CD8-positive, alpha-beta T cell (primary cell): ENCODE measurements at regions of chr9 and their contacts with region 1.

Region 1: GRCh38 chr9:98002808-98003207 is 19.7 kb downstream of the ANP32B start:
- DNase-seq: no peak
- ATAC-seq: no peak
- H3K4me3 ChIP-seq: no peak overlapping the region
- H3K4me3 Mint-ChIP-seq: no peak overlapping the region
- H3K27ac ChIP-seq: no peak overlapping the region
- H3K27ac Mint-ChIP-seq: peak overlapping the region; percentile 52
- H3K4me1 ChIP-seq: no peaks in the 10 kb centered on the region
- H3K4me1 Mint-ChIP-seq: peaks cover 54% of the 10 kb centered on the region
- H3K27me3 ChIP-seq: no peaks in the 10 kb centered on the region
- H3K27me3 Mint-ChIP-seq: no peaks in the 10 kb centered on the region
- CTCF ChIP-seq: no peak

Region 2: GRCh38 chr9:97271292-97271691 is 731.5 kb before region 1 on chr9:
- CTCF ChIA-PET with region 1: no interaction called
- POLR2A ChIA-PET with region 1: no interaction called
- intact Hi-C with region 1: no loop called
- DNase-seq: no peak
- ATAC-seq: no peak
- H3K4me3 ChIP-seq: no peak overlapping the region
- H3K4me3 Mint-ChIP-seq: no peak overlapping the region
- H3K27ac ChIP-seq: no peak overlapping the region
- H3K27ac Mint-ChIP-seq: no peak overlapping the region
- H3K4me1 ChIP-seq: no peaks in the 10 kb centered on the region
- H3K4me1 Mint-ChIP-seq: peaks cover 7% of the 10 kb centered on the region
- H3K27me3 ChIP-seq: no peaks in the 10 kb centered on the region
- H3K27me3 Mint-ChIP-seq: no peaks in the 10 kb centered on the region
- CTCF ChIP-seq: no peak

Region 3: GRCh38 chr9:97990266-97990665 is 12.5 kb before region 1 on chr9:
- CTCF ChIA-PET with region 1: interaction called, 4 read pairs
- POLR2A ChIA-PET with region 1: no interaction called
- intact Hi-C with region 1: loop called in 1 of 2 experiments (anchors 2 kb)
- DNase-seq: peak in 1 of 9 experiments; percentile 27
- ATAC-seq: no peak
- H3K4me3 ChIP-seq: no peak overlapping the region
- H3K4me3 Mint-ChIP-seq: no peak overlapping the region
- H3K27ac ChIP-seq: peak overlapping the region in 1 of 2 experiments; percentile 32
- H3K27ac Mint-ChIP-seq: peak overlapping the region; percentile 45
- H3K4me1 ChIP-seq: peaks cover 79% of the 10 kb centered on the region
- H3K4me1 Mint-ChIP-seq: peaks cover 87% of the 10 kb centered on the region
- H3K27me3 ChIP-seq: no peaks in the 10 kb centered on the region
- H3K27me3 Mint-ChIP-seq: no peaks in the 10 kb centered on the region
- CTCF ChIP-seq: no peak